ENCODE measurements at regions of chr1 and their contacts with region 1.

Region 1: DNA sequence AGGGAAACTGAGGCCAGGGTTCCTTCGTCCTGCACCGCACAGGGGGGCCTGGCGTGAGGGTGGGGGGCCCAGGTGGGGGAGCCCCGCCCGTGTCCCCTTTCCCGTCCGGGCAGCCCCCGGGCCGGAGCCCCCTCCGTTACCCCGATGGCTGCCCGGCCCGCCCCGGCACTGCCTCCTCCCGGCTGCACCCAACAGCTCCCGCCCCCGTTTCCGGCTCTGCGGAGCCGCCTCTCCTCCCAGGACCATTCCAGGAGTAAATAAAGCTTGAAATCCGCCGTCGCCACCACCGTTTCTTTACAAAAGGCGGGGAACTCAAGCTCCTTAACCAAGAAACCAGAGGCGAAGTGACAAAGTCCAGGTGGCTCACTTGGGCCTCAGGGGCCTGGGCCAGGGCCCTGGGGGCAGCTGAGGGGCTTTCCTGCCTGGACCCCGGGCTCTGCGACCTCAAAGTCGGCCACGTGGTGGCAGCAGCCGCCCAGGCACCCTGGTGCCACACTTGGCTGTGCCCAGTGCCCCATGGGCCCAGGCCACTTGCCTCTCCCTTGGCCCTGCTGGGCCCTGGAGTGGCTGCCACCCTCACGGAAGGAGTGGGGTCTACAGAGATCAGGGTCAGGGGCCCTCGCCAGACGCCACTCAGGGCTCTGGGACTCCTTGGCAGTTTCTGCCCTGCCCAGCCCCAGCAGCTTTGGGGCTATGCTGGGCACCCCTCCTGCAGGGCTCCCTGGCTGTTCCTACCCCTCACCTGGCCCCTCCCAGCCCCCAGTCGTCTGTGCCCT is 514 bp upstream of the FAAP20 start:
- DNase-seq: peak; percentile 87
- H3K4me3 Mint-ChIP-seq: peak overlapping the region; percentile 69
- H3K27ac Mint-ChIP-seq: no peak overlapping the region
- H3K4me1 Mint-ChIP-seq: no peaks in the 10 kb centered on the region
- H3K27me3 Mint-ChIP-seq: no peaks in the 10 kb centered on the region
- CTCF ChIP-seq: peak; percentile 85

Region 2: DNA sequence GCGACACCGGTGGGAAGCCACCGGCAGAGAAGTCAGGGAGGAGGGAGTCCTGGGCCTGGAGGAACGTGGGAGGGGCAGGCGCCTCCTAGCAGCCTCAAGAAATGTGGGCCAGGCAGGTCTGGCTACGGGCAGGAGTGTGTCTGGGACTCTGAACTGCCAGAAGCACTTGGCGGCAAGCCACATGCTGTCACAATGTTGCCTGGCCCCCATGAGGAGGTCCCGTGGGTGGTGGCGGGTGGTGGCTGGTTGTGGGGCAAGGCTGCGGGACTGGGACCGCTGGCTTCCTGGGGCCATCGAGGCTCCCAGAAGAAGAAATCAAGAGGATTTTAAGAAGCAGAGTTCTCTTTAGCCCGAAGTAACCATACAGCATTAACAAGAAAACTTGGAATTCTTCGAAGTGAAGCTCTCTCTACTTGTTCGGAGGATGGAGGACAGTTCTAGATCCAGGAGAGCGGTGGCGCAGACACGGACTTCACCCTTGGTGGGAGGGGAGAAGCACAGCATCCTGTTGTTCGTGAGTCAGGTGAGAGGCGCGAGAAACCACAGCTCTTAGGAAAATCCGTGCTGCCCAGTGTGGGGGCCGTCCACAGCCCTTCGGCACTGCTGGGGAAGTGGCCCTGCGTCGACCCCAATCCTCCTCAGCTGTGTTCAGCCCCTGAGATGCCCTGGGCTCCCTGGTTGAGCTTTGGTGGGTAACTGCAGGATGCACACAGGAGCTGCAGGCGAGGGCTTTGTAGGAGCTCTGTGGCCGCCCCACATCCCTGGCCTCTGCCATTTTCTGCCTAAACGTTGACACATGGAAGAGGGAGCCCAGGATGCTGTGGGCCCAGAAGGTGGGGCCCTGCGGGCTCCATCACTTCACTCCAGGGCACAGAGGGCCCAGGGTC is 45.4 kb after region 1 on chr1:
- CTCF ChIA-PET with region 1: no interaction called
- intact Hi-C with region 1: no loop called
- DNase-seq: no peak
- H3K4me3 Mint-ChIP-seq: no peak overlapping the region
- H3K27ac Mint-ChIP-seq: no peak overlapping the region
- H3K4me1 Mint-ChIP-seq: peaks cover 12% of the 10 kb centered on the region
- H3K27me3 Mint-ChIP-seq: no peaks in the 10 kb centered on the region
- CTCF ChIP-seq: no peak

Region 3: GRCh38 chr1:2314803-2315673 is 120.0 kb after region 1 on chr1:
- CTCF ChIA-PET with region 1: interaction called, 6 read pairs
- intact Hi-C with region 1: loop called (anchors 5 kb)
- DNase-seq: peak; percentile 49
- H3K4me3 Mint-ChIP-seq: peak overlapping the region; percentile 39
- H3K27ac Mint-ChIP-seq: peak overlapping the region; percentile 30
- H3K4me1 Mint-ChIP-seq: no peaks in the 10 kb centered on the region
- H3K27me3 Mint-ChIP-seq: no peaks in the 10 kb centered on the region
- CTCF ChIP-seq: peak; percentile 94

Region 4: GRCh38 chr1:2381741-2382620 is 186.9 kb after region 1 on chr1:
- CTCF ChIA-PET with region 1: interaction called, 16 read pairs
- intact Hi-C with region 1: loop called (anchors 5 kb)
- DNase-seq: peak; percentile 63
- H3K4me3 Mint-ChIP-seq: no peak overlapping the region
- H3K27ac Mint-ChIP-seq: no peak overlapping the region
- H3K4me1 Mint-ChIP-seq: no peaks in the 10 kb centered on the region
- H3K27me3 Mint-ChIP-seq: no peaks in the 10 kb centered on the region
- CTCF ChIP-seq: peak; percentile 49

Region 5: DNA sequence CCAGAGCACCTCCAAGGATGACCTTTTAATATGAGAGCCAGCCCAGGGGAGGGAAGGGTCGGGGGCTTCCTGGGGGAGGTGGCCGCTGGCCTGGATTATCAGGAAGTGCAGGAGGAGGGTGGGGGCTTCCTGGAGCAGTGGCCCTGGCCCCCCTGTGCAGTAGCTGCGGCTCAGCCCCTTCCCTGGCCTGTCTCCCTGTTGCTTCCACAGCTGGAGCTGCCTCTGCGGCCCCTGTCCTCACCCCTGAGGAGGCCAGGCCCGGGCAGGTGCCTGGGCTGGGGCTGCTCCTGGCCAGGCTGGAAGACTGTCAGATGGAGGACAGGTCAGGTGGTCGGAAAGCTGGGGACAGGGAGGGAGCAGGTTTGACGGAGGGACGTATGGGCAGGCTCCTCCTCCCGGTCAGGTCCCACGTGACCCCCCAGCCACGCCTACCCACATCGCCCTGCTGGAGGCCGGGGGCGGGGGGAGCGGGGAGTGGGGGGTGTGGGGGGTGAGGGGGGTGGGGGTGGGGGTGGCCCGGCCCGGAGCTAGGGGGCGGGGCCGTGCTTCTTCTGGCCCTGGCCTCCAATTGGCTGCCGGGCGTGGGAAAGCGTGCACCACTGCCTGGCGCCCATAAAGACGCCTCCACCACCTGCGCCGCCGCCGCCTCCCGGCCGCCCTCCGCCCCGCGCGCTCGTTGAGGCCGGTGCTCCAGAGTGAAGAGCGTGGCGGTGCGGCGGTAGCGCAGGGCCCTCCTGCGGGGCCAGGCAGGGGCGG is 350.9 kb after region 1 on chr1:
- CTCF ChIA-PET with region 1: interaction called, 4 read pairs
- intact Hi-C with region 1: loop called (anchors 10 kb)
- DNase-seq: peak; percentile 91
- H3K4me3 Mint-ChIP-seq: peak overlapping the region; percentile 80
- H3K27ac Mint-ChIP-seq: peak overlapping the region; percentile 60
- H3K4me1 Mint-ChIP-seq: no peaks in the 10 kb centered on the region
- H3K27me3 Mint-ChIP-seq: no peaks in the 10 kb centered on the region
- CTCF ChIP-seq: no peak

Measured in Calu3 (cell line).